ENCODE measurements at regions of chr17 and their contacts with region 1.

Region 1: GRCh38 chr17:3845621-3846441 is at the start of gene NCBP3:
- DNase-seq: peak; percentile 89
- H3K4me3 Mint-ChIP-seq: peak within 1 kb of the TSS; percentile 96
- H3K27ac Mint-ChIP-seq: peak within 1 kb of the TSS; percentile 93
- H3K4me1 Mint-ChIP-seq: peaks cover 26% of the 10 kb centered on the region
- H3K27me3 Mint-ChIP-seq: peaks cover 10% of the 10 kb centered on the region
- total RNA-seq, gene NCBP3: 43.6 to 43.7 TPM

Region 2: GRCh38 chr17:3732210-3732621 is 113.6 kb before region 1 on chr17:
- CTCF ChIA-PET with region 1: interaction called, 64 read pairs
- POLR2A ChIA-PET with region 1: no interaction called
- DNase-seq: no peak
- H3K4me3 Mint-ChIP-seq: no peak overlapping the region
- H3K27ac Mint-ChIP-seq: no peak overlapping the region
- H3K4me1 Mint-ChIP-seq: peaks cover 12% of the 10 kb centered on the region
- H3K27me3 Mint-ChIP-seq: no peaks in the 10 kb centered on the region

Region 3: GRCh38 chr17:3770466-3770865 is 75.4 kb before region 1 on chr17:
- CTCF ChIA-PET with region 1: no interaction called
- POLR2A ChIA-PET with region 1: no interaction called
- DNase-seq: no peak
- H3K4me3 Mint-ChIP-seq: no peak overlapping the region
- H3K27ac Mint-ChIP-seq: no peak overlapping the region
- H3K4me1 Mint-ChIP-seq: peaks cover 52% of the 10 kb centered on the region
- H3K27me3 Mint-ChIP-seq: peaks cover 5% of the 10 kb centered on the region

Region 4: DNA sequence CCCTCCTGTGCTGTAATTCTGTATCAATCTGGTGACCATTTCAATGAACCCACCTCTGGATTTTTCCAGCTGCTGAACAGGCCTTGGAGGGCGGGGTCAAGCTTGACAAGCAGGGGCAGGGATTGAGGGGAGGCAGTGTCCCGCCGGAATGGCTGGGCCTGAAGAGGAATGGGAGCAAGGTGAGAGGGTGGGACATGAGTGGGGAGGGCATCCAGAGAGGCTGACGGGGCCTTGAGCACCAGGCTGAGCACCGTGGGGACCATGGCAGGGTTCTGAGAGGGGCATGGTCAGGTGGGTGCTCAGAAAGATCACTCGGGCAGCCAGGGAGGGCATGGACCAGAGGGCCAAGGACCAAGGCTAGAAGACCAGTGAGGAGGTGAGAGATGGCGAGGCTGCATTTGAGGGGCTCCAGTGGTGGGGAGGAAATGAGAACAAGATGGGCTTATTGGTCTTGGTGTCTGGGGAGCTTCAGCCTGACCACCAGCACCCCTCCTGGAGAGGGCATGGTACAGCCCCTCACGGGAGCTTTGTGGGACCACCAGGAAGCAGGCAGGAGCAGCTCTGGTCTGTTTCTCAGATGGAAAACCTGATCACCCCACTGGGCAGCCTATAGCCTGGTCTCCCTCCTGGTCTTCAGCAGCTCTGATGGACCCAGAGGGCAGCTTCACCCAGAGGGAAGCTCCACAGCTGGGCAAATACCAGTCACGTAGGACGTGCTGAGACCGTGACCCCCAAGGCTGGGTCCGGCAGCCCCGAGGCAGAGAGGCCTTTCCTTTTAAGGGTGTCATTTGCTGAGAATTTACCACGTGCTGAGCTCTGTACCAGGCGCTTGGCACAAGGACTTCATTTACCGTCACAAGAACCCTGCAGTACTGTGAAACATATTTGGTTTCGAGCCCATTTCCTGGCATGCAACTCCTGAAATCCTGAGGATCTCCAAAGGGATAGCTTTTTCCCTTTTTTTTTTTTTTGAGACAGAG is 11.6 kb after region 1 on chr17:
- CTCF ChIA-PET with region 1: interaction called, 51 read pairs
- POLR2A ChIA-PET with region 1: no interaction called
- DNase-seq: no peak
- H3K4me3 Mint-ChIP-seq: no peak overlapping the region
- H3K27ac Mint-ChIP-seq: no peak overlapping the region
- H3K4me1 Mint-ChIP-seq: no peaks in the 10 kb centered on the region
- H3K27me3 Mint-ChIP-seq: no peaks in the 10 kb centered on the region

Region 5: DNA sequence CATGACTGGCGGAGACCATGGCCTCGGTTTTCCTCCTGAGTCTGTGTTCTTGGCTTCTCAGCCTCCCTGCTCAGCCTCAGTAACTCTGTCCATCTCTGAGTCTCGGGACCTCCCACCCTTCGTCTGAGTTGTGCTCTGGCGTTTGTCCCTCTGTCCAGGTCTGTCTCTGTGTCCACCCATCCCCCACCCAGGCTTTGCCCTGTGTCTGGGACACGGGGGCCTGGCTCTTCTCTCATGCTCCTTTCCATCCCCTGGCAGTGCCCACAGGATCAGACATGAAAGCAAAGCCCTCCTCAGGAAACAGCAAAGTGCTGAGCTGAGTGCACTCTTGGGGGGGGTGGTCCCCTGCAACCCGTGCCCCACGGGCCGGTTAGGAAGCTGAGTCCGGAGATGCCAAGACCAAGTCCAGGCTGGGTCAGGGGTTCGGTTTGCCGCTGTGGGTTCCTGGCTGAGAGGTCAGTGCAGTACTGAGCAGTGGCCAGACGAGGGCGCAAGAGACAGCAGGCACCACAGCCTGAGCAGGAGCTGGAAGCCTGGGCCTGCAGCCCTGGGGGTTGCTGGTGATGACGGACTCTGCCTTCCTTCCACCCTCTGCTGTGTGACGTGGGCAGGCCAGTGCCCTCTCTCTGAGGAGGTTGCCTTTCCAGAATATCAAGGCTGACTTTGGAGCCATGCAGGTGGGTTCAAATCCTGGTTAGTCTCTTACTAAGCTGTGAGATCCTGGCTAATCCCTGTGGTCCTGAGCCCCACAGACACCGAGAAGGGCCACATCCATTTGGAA is 67.9 kb after region 1 on chr17:
- CTCF ChIA-PET with region 1: interaction called, 21 read pairs
- POLR2A ChIA-PET with region 1: no interaction called
- DNase-seq: peak; percentile 82
- H3K4me3 Mint-ChIP-seq: no peak overlapping the region
- H3K27ac Mint-ChIP-seq: peak overlapping the region; percentile 10
- H3K4me1 Mint-ChIP-seq: peaks cover 48% of the 10 kb centered on the region
- H3K27me3 Mint-ChIP-seq: no peaks in the 10 kb centered on the region

Region 6: GRCh38 chr17:4010754-4011153 is 164.9 kb after region 1 on chr17:
- CTCF ChIA-PET with region 1: no interaction called
- POLR2A ChIA-PET with region 1: no interaction called
- DNase-seq: no peak
- H3K4me3 Mint-ChIP-seq: no peak overlapping the region
- H3K27ac Mint-ChIP-seq: no peak overlapping the region
- H3K4me1 Mint-ChIP-seq: no peaks in the 10 kb centered on the region
- H3K27me3 Mint-ChIP-seq: no peaks in the 10 kb centered on the region